B cell (primary cell): ENCODE measurements at regions of chr3 and their contacts with region 1.

Region 1: DNA sequence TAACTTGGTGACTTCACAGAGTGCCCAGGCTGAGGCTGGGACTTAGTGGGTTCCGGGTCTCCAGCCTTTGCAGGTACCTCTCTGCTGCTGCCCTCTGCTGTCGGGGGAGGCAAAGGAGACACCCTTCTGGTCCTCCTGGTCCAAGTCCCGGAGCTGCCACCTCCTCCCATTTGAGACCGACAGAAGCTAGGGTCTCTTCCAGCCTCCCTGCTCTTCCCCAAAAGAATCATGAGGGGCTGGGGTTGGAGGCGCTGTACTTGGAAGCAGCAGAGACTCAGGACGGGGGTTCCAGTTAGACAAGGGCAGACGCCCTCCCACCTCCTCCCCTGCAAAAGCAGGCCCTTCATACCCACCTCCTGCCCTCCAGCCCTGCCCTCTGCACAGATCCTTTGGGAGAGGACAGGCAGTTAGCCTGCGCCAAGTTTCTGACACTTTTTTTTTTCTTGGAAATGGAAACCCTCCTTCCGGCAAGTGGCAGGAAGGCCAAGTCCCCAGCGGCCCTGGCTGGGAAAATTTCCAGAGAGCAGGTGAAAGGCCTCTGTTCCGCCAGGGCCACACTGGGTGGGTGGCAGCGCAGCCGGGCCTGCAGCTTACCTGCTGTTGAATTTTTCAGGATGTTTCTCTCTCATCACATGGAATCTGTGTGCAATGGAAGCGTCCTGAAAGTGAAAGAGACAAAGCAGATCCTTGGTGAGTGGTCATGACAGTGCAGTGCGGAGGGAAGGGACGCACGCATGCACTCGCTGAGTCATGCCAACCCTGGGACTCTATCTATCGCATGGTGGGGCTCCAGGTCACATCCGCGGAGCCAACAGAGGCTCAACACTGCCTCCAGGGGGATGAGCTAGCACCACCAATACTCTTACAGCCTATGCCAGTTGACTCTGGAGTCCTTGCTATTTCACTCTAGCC is 119.9 kb downstream of the DGKG start:
- DNase-seq: peak; percentile 70
- ATAC-seq: peak; percentile 69
- H3K4me3 ChIP-seq: no peak overlapping the region
- H3K4me3 Mint-ChIP-seq: no peak overlapping the region
- H3K27ac ChIP-seq: no peak overlapping the region
- H3K27ac Mint-ChIP-seq: no peak overlapping the region
- H3K4me1 ChIP-seq: peaks cover 0 to 14% of the 10 kb centered on the region in 2 donors
- H3K4me1 Mint-ChIP-seq: peaks cover 11% of the 10 kb centered on the region
- H3K27me3 ChIP-seq: no peaks in the 10 kb centered on the region
- H3K27me3 Mint-ChIP-seq: no peaks in the 10 kb centered on the region
- CTCF ChIP-seq: peak; percentile 53

Region 2: DNA sequence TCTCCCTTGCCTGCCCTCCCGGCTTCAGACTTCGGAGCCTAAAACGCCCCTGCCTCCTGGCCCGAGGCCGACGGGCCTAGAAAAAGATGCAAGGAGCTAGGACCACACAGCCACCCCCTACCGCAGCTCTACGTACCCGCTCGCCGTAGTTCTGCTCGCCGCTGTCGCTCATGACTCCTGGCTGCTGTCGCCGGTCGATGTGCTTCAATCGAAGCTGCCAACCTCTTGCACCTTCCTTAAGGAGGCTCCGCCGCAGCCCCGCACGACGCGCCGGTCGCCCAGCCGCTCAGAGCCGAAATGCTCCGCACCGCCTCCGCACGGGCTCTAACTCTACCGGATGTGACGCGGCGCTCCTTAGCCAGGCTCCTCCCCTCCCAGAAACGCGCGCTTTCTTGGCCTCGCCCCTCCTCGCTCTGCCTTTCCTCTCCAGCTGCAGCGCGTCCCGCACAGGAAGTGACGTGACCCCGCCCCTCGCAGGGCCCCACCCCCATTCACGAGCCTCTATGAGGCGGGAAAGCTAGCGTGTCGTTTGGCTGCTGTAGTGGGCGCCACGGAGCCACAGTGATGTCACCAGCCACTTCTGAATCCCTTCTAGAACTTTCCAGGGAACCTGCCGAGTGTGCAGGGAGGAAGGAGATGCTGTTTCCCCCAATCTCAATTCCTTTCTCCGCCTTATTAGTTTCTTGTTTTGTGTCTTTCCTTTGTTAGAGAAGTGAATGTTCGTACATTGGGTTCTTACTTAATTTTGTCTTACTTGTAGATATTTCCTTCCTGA is 304.3 kb before region 1 on chr3 and contains the start of gene TRA2B:
- CTCF ChIA-PET with region 1: no interaction called
- POLR2A ChIA-PET with region 1: no interaction called
- intact Hi-C with region 1: no loop called
- DNase-seq: peak; percentile 99
- ATAC-seq: peak; percentile 89
- H3K4me3 ChIP-seq: peak within 1 kb of the TSS; percentile 99 to 100 (median 100)
- H3K4me3 Mint-ChIP-seq: peak within 1 kb of the TSS; percentile 99
- H3K27ac ChIP-seq: peak within 1 kb of the TSS; percentile 99 to 100
- H3K27ac Mint-ChIP-seq: peak within 1 kb of the TSS; percentile 100
- H3K4me1 ChIP-seq: peaks cover 26 to 28% of the 10 kb centered on the region in 2 donors
- H3K4me1 Mint-ChIP-seq: peaks cover 39% of the 10 kb centered on the region
- H3K27me3 ChIP-seq: no peaks in the 10 kb centered on the region
- H3K27me3 Mint-ChIP-seq: no peaks in the 10 kb centered on the region
- CTCF ChIP-seq: peak; percentile 51
- total RNA-seq, gene TRA2B: 218 and 220 TPM in 2 replicates

Region 3: GRCh38 chr3:185976977-185977678 is 265.0 kb before region 1 on chr3:
- CTCF ChIA-PET with region 1: interaction called, 74 read pairs
- POLR2A ChIA-PET with region 1: no interaction called
- intact Hi-C with region 1: loop called (anchors 1 kb)
- DNase-seq: peak; percentile 84
- ATAC-seq: peak; percentile 88
- H3K4me3 ChIP-seq: no peak overlapping the region
- H3K4me3 Mint-ChIP-seq: no peak overlapping the region
- H3K27ac ChIP-seq: no peak overlapping the region
- H3K27ac Mint-ChIP-seq: peak overlapping the region; percentile 11
- H3K4me1 ChIP-seq: peaks cover 0 to 2% of the 10 kb centered on the region in 2 donors
- H3K4me1 Mint-ChIP-seq: peaks cover 7% of the 10 kb centered on the region
- H3K27me3 ChIP-seq: no peaks in the 10 kb centered on the region
- H3K27me3 Mint-ChIP-seq: no peaks in the 10 kb centered on the region
- CTCF ChIP-seq: peak; percentile 93

Region 4: GRCh38 chr3:186790261-186790981 is 548.3 kb after region 1 on chr3:
- CTCF ChIA-PET with region 1: no interaction called
- POLR2A ChIA-PET with region 1: no interaction called
- intact Hi-C with region 1: no loop called
- DNase-seq: peak; percentile 29
- ATAC-seq: no peak
- H3K4me3 ChIP-seq: no peak overlapping the region
- H3K4me3 Mint-ChIP-seq: no peak overlapping the region
- H3K27ac ChIP-seq: peak overlapping the region in 1 of 2 donors; percentile 61
- H3K27ac Mint-ChIP-seq: peak overlapping the region; percentile 32
- H3K4me1 ChIP-seq: peaks cover 26 to 28% of the 10 kb centered on the region in 2 donors
- H3K4me1 Mint-ChIP-seq: peaks cover 44% of the 10 kb centered on the region
- H3K27me3 ChIP-seq: no peaks in the 10 kb centered on the region
- H3K27me3 Mint-ChIP-seq: no peaks in the 10 kb centered on the region
- CTCF ChIP-seq: no peak